CD8-positive, alpha-beta T cell (primary cell): ENCODE measurements at regions of chr6 and their contacts with region 1.

Region 1: GRCh38 chr6:144955859-144956258 is 670.7 kb downstream of the UTRN start:
- DNase-seq: no peak
- ATAC-seq: no peak
- H3K4me3 ChIP-seq: no peak overlapping the region
- H3K4me3 Mint-ChIP-seq: no peak overlapping the region
- H3K27ac ChIP-seq: no peak overlapping the region
- H3K27ac Mint-ChIP-seq: no peak overlapping the region
- H3K4me1 ChIP-seq: no peaks in the 10 kb centered on the region
- H3K4me1 Mint-ChIP-seq: no peaks in the 10 kb centered on the region
- H3K27me3 ChIP-seq: no peaks in the 10 kb centered on the region
- H3K27me3 Mint-ChIP-seq: peaks cover 2% of the 10 kb centered on the region
- CTCF ChIP-seq: no peak

Region 2: GRCh38 chr6:144637541-144637940 is 318.3 kb before region 1 on chr6:
- CTCF ChIA-PET with region 1: no interaction called
- POLR2A ChIA-PET with region 1: no interaction called
- intact Hi-C with region 1: no loop called
- DNase-seq: no peak
- ATAC-seq: no peak
- H3K4me3 ChIP-seq: no peak overlapping the region
- H3K4me3 Mint-ChIP-seq: no peak overlapping the region
- H3K27ac ChIP-seq: no peak overlapping the region
- H3K27ac Mint-ChIP-seq: no peak overlapping the region
- H3K4me1 ChIP-seq: no peaks in the 10 kb centered on the region
- H3K4me1 Mint-ChIP-seq: peaks cover 13% of the 10 kb centered on the region
- H3K27me3 ChIP-seq: no peaks in the 10 kb centered on the region
- H3K27me3 Mint-ChIP-seq: no peaks in the 10 kb centered on the region
- CTCF ChIP-seq: no peak

Region 3: DNA sequence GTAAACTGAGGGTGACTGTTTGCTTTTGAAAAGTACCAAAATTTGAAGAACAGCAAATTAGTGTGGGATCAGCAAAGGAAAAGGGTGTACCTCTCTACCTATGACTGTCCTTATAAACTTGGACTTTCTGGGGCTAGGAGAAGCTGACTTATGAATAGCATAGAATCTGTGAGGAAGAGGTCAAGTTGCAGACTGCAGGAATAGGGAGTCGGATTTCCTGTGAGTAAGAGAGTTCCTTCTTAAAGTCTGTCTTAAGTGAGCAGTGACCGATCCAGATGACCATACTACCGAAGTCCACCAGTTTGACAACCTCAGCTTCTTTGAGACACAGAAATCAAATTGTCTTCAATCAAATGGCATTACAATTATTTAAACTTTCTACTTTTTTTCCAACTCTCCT is 38.0 kb after region 1 on chr6:
- CTCF ChIA-PET with region 1: no interaction called
- POLR2A ChIA-PET with region 1: no interaction called
- intact Hi-C with region 1: loop called in 1 of 2 experiments (anchors 1 kb)
- DNase-seq: no peak
- ATAC-seq: no peak
- H3K4me3 ChIP-seq: no peak overlapping the region
- H3K4me3 Mint-ChIP-seq: no peak overlapping the region
- H3K27ac ChIP-seq: no peak overlapping the region
- H3K27ac Mint-ChIP-seq: no peak overlapping the region
- H3K4me1 ChIP-seq: no peaks in the 10 kb centered on the region
- H3K4me1 Mint-ChIP-seq: no peaks in the 10 kb centered on the region
- H3K27me3 ChIP-seq: peaks cover 0 to 6% of the 10 kb centered on the region in 2 experiments
- H3K27me3 Mint-ChIP-seq: peaks cover 30% of the 10 kb centered on the region
- CTCF ChIP-seq: no peak